Ascending aorta (tissue), 2 donors: ENCODE measurements at regions of chr1 and their contacts with region 1.

Region 1: DNA sequence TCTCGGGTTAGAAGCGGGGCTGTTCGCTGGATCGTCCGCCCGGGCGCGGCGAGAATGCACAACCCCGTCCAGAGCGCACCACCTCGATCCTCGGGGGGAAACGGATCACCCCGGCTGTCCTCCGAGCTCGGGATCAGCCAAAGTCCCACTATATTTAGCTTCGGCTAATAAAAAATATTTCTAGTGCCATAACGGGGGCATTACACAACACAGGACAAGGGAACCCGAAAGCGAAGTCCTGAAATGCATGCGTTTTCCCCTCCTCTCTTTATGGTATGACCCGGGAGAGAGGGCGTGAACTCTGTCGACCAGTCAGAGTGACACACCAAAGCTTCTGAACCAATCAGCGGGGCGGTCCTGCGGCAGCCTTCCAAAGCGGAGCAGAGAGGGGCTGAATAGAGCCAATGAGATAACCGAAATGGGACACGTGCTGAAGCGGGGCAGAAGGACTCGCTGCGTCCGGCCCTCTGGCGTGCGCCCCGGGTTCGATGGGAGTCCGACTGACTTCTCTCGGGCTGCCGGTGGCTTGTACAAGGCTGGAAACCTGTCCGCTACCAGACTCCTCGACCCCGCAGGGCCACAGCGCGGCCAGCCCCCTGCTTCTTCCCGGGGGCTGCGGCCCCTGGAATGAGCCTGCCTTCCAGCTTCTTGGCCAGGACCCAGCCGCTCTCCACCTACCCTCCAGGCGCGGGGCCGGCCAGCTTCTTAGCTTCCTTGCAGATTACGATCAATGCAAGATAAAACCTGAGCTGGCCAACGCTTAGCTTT is at the start of gene ALDH4A1:
- DNase-seq: peak; percentile 97 to 99
- H3K4me3 ChIP-seq: peak within 1 kb of the TSS; percentile 76 to 80
- H3K27ac ChIP-seq: peak within 1 kb of the TSS; percentile 78 to 87
- H3K4me1 ChIP-seq: peaks cover 9 to 19% of the 10 kb centered on the region in 2 donors
- H3K27me3 ChIP-seq: no peaks in the 10 kb centered on the region
- CTCF ChIP-seq: no peak
- total RNA-seq, gene ALDH4A1: 16.6 TPM

Region 2: GRCh38 chr1:18956369-18957135 is 53.8 kb after region 1 on chr1 and contains the start of gene IFFO2:
- intact Hi-C with region 1: loop called (anchors 1 kb)
- DNase-seq: peak; percentile 83 to 99
- H3K4me3 ChIP-seq: peak within 1 kb of the TSS; percentile 94 to 98
- H3K27ac ChIP-seq: peak within 1 kb of the TSS; percentile 94 to 97
- H3K4me1 ChIP-seq: peaks cover 3 to 24% of the 10 kb centered on the region in 2 donors
- H3K27me3 ChIP-seq: no peaks in the 10 kb centered on the region
- CTCF ChIP-seq: peak in 1 of 3 experiments; percentile 10
- total RNA-seq, gene IFFO2: 131 TPM

Region 3: DNA sequence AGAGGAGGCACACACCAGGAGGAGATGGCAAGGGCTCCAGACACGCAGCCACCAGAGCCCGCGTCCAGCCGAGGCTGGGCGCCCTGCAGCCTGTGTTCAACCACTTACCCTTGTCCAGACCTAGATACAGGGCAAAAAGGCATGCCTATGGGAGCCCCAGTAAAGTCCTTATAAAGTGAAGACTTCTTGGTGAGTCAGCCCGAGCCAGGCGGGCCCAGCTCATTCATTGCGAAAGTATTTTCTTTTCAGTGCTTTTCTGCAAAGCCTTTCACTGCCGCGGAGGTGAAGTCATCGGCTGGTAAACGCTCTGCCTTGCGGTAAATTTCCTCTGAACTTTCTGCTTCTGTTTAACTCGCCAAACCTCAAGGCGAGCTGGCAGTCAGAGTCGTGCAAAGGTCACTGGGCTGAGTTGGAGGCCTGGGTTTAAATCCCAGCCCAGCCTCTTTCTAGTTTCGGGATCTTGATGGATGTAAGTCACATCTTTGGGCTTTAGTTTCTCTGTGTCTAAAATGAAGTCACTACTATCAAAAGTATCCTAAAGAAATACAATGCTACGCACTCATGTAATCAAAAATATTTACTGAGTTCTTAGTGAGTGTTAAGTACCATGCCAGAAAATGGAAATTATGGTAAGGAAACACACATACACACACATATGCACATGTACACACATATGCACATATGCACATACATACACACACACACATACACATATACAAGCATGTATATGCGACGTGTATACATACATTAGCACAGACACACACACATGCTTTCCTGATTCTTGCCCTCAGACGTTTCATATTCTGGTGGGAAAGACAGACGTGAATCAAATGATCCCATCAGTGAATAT is 108.5 kb after region 1 on chr1:
- intact Hi-C with region 1: loop called (anchors 2 kb)
- DNase-seq: peak; percentile 63 to 95
- H3K4me3 ChIP-seq: peak overlapping the region in 1 of 2 donors; percentile 6
- H3K27ac ChIP-seq: peak overlapping the region; percentile 85 to 92
- H3K4me1 ChIP-seq: peaks cover 17 to 24% of the 10 kb centered on the region in 2 donors
- H3K27me3 ChIP-seq: no peaks in the 10 kb centered on the region
- CTCF ChIP-seq: no peak

Region 4: GRCh38 chr1:19096036-19096833 is 193.5 kb after region 1 on chr1:
- intact Hi-C with region 1: loop called (anchors 5 kb)
- DNase-seq: no peak
- H3K4me3 ChIP-seq: no peak overlapping the region
- H3K27ac ChIP-seq: no peak overlapping the region
- H3K4me1 ChIP-seq: no peaks in the 10 kb centered on the region
- H3K27me3 ChIP-seq: no peaks in the 10 kb centered on the region
- CTCF ChIP-seq: peak in 2 of 3 experiments; percentile 23 to 47